Activated CD4-positive, alpha-beta T cell treated with anti-CD3 and anti-CD28 coated beads, Interleukin-2, amount 10 ng/mL, durations not matched to agents 24 days and 14 days (primary cell): ENCODE measurements at regions of chr3 and their contacts with region 1.

Region 1: DNA sequence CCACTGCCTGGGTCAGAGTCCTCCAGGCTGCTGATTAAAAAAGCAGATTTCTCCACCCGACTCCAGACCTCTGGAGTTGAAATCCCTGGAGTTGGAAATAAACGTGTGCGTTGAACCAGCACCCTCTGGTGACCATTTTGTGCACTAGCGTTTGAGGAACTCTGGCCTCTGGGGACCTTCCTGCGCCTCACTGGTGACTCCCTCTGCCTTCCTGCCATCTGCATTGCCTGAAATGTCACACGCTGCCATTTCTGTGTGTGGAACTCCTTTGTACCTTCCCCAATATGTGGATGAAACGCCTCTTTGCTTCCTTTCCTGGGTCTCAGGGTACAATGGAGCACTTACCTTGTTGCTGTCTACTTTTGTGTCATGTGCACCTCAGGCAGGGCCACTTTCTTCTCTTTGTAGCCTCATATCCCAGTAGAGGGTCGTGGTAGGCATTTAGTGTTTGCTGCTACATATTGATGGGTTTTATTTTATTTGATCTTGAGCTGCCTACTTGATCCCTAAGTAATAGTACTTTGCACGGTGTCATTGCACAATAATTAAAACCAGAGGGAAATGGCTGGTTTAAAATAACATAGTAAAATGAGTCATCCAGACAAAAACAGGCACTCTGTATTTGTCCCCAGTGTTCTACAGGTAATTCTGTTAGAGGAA is 56.8 kb downstream of the GPR171 start:
- DNase-seq: peak; percentile 86
- H3K4me3 Mint-ChIP-seq: no peak overlapping the region
- H3K27ac Mint-ChIP-seq: no peak overlapping the region
- H3K4me1 Mint-ChIP-seq: no peaks in the 10 kb centered on the region
- H3K27me3 Mint-ChIP-seq: peaks cover 29% of the 10 kb centered on the region

Region 2: DNA sequence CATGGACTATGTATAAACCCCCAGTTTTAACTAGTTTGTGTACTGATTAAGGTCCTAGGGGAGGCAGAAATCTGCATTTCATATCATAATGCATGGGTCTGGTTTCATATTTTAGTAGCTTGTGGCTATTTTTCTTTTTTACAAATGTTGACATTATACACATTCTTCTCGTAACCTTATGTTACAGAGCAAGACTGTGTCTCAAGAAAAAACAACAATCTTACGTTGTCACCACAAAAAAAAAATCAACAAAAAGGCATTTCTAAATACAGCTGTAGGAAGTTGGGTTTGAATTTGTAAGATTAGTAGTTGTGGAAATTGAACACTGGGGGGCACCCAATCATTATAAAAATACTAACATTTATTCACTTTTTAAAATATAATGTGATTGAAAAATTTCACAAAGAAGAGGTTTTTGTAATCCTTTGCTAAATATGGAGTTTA is 617.8 kb before region 1 on chr3:
- intact Hi-C with region 1: loop called (anchors 2 kb)
- DNase-seq: no peak
- H3K4me3 Mint-ChIP-seq: no peak overlapping the region
- H3K27ac Mint-ChIP-seq: no peak overlapping the region
- H3K4me1 Mint-ChIP-seq: peaks cover 6% of the 10 kb centered on the region
- H3K27me3 Mint-ChIP-seq: peaks cover 14% of the 10 kb centered on the region

Region 3: GRCh38 chr3:150721285-150722130 is 424.7 kb before region 1 on chr3:
- intact Hi-C with region 1: loop called (anchors 1 kb)
- DNase-seq: peak; percentile 79
- H3K4me3 Mint-ChIP-seq: no peak overlapping the region
- H3K27ac Mint-ChIP-seq: no peak overlapping the region
- H3K4me1 Mint-ChIP-seq: peaks cover 20% of the 10 kb centered on the region
- H3K27me3 Mint-ChIP-seq: no peaks in the 10 kb centered on the region

Region 4: GRCh38 chr3:150787741-150788370 is 358.3 kb before region 1 on chr3:
- intact Hi-C with region 1: loop called (anchors 1 kb)
- DNase-seq: peak; percentile 92
- H3K4me3 Mint-ChIP-seq: peak overlapping the region; percentile 2
- H3K27ac Mint-ChIP-seq: peak overlapping the region; percentile 39
- H3K4me1 Mint-ChIP-seq: peaks cover 39% of the 10 kb centered on the region
- H3K27me3 Mint-ChIP-seq: peaks cover 4% of the 10 kb centered on the region

Region 5: DNA sequence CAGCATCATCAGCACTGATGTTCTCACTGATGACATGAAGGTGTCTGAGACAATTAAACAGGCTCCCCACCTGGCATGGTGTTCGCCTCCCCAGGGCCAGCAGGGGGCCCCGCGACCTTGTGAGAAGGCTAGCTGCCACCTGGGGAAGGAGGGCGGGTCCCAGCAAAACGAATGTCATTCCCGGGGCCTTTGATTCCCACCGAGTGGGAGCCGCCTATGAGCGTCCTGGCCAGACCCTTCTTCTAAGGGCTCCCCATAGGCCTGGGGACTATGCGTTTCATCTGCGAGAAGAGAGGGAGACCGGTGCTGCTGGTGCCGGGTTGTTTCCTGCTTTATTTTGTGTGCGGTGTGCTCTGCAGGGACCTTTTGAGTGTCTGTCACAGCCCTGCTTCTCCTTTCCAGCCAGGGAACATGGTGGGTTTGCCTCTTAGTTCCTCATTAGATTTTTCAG is 220.4 kb before region 1 on chr3:
- intact Hi-C with region 1: loop called (anchors 1 kb)
- DNase-seq: peak; percentile 85
- H3K4me3 Mint-ChIP-seq: peak overlapping the region; percentile 52
- H3K27ac Mint-ChIP-seq: no peak overlapping the region
- H3K4me1 Mint-ChIP-seq: peaks cover 2% of the 10 kb centered on the region
- H3K27me3 Mint-ChIP-seq: peaks cover 14% of the 10 kb centered on the region

Region 6: GRCh38 chr3:151067158-151067557 is 79.0 kb before region 1 on chr3:
- intact Hi-C with region 1: loop called (anchors 1 kb)
- DNase-seq: peak; percentile 61
- H3K4me3 Mint-ChIP-seq: no peak overlapping the region
- H3K27ac Mint-ChIP-seq: no peak overlapping the region
- H3K4me1 Mint-ChIP-seq: no peaks in the 10 kb centered on the region
- H3K27me3 Mint-ChIP-seq: peaks cover 19% of the 10 kb centered on the region

Region 7: GRCh38 chr3:151156618-151157216 is 10.5 kb after region 1 on chr3:
- intact Hi-C with region 1: loop called (anchors 1 kb)
- DNase-seq: peak; percentile 83
- H3K4me3 Mint-ChIP-seq: no peak overlapping the region
- H3K27ac Mint-ChIP-seq: no peak overlapping the region
- H3K4me1 Mint-ChIP-seq: no peaks in the 10 kb centered on the region
- H3K27me3 Mint-ChIP-seq: peaks cover 18% of the 10 kb centered on the region

Region 8: GRCh38 chr3:151599103-151599672 is 453.0 kb after region 1 on chr3:
- intact Hi-C with region 1: no loop called
- DNase-seq: no peak
- H3K4me3 Mint-ChIP-seq: no peak overlapping the region
- H3K27ac Mint-ChIP-seq: no peak overlapping the region
- H3K4me1 Mint-ChIP-seq: no peaks in the 10 kb centered on the region
- H3K27me3 Mint-ChIP-seq: peaks cover 2% of the 10 kb centered on the region

Region 9: GRCh38 chr3:151753846-151754245 is 607.6 kb after region 1 on chr3:
- intact Hi-C with region 1: no loop called
- DNase-seq: no peak
- H3K4me3 Mint-ChIP-seq: no peak overlapping the region
- H3K27ac Mint-ChIP-seq: no peak overlapping the region
- H3K4me1 Mint-ChIP-seq: no peaks in the 10 kb centered on the region
- H3K27me3 Mint-ChIP-seq: no peaks in the 10 kb centered on the region

Region 10: DNA sequence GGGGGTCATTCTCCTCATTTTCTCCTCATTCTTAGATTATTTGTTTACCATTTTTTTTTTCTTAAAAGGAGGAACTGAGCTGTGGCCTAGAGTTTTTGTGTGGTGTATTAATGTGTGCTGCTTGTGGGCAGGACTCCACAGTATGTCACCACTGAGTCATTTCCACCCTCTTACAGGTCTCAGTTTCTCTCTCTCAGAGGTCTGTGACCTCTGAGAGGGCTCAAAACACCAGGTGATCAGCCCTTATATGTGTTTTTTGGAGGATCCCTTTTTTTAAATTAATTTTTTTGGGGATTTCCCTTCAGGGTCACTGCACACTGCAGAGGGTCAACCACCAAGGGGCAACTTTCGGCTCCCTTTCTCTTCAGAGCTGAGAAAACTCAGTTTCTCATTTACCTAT is 893.7 kb after region 1 on chr3:
- intact Hi-C with region 1: no loop called
- DNase-seq: no peak
- H3K4me3 Mint-ChIP-seq: no peak overlapping the region
- H3K27ac Mint-ChIP-seq: no peak overlapping the region
- H3K4me1 Mint-ChIP-seq: no peaks in the 10 kb centered on the region
- H3K27me3 Mint-ChIP-seq: peaks cover 12% of the 10 kb centered on the region